ENCODE measurements at regions of chr4 and their contacts with region 1.

Region 1: GRCh38 chr4:44629280-44629866 is 22.1 kb downstream of the YIPF7 start:
- DNase-seq: no peak
- ATAC-seq: peak; percentile 53 to 55

Region 2: DNA sequence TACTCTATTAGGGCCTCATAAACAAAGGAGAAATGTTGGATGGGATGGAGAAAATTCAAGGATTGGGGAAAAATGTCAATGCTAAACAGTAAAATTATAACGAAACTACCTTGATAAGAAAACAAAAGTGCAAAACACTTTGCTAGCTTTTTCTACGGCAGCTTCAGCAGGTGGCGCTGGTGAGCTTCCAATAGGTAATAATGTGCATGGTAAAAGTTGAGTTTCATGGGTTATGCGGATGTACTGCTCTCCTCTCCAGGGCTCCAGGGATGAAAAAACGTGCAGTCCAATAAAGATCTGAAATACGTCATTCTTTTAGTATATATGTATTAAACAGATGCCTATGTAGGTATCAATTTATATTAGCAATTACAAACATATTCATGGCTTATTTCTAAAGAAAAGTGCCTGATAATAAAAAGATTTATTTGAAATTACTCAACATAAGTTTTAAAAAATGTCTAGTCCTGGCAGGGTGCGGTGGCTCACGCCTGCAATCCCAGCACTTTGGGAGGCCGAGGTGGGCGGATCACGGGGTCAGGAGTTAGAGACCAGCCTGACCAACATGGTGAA is 1497.3 kb before region 1 on chr4:
- intact Hi-C with region 1: loop called in 1 of 2 experiments (anchors 5 kb)
- DNase-seq: peak; percentile 54
- ATAC-seq: no peak

Region 3: DNA sequence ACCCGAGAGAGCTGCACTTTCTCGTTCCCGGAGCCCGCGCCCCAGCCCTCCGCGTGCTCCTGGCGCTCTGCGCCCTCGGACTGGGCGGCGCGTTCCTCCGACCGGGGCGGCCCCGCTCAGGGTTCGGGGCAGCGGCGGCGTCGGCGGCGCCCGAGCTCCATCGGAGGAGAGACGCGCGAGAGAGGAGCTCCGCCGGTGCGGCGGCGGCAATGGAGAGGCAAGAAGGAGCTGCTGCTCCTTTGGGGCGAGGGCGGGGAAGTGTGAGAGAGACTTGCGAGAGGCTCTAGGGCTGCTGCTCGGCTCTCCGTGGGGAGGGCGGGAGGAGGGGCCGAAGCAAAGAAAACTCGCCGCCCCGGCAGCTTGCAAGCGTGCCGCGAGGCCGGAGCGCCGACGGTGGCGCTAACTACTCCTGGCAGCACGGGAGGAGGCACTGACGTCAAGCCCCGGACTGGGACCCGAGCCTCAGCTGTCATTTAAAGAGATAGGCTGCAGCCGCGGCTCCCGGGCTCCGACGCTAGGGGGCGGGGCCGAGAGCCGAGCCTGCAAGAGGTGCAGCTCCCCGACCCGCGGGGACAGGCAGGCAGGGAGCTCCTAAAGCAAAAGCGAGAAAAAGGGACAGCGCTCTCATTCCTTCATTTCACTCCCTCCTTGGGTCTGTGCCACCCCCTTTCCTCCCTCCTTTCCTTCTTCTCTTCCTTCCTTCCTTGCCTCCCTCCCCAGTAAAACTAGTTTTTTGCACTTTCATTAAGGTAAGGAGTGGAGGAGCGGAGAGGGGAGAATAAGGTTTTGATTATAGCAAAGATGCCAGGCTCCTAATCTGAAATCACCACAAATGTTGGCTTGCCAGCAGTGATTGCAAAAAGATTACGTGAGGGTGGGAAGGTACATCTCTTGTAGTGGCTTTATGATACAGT is 180.6 kb before region 1 on chr4 and contains the start of gene KCTD8:
- intact Hi-C with region 1: loop called in 1 of 2 experiments (anchors 10 kb)
- DNase-seq: peak; percentile 87
- ATAC-seq: peak; percentile 90 to 96
- total RNA-seq, gene KCTD8: 0.12 to 0.18 TPM

Measured in left cardiac atrium (tissue), 4 donors.